ENCODE measurements at regions of chr7 and their contacts with region 1.

Region 1: DNA sequence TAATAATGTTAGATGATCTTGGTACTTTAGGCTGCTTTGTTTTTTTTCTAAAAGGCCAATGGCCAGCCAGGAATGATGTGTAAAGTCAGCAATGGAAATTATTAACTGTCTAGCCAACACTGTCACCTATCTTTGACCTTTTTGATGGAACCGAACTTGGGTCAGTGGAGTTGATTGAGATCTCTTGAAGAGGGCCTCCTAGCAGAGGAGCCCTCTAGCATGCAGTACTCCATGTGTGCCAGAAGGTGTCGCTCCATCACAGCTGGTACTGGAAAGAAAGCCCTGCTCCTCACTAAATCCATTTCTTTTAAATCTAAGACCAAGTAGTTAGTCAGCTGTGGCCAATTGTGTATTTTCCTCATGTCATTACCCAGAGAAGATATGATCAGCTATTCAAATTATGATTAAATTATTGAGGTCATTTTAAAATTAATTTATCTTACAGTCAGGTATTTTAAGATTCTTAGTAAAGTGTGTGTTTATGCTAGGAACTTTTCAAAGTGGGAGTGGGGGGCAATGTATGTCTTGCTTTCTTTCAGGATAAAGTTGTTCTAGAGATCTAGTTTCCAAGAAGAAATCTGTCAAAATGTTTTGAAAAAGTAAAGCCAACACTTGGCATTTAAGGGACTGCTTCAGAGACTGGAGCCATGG is 33.1 kb upstream of the CROT start:
- DNase-seq: peak; percentile 50
- H3K4me3 ChIP-seq: no peak overlapping the region
- H3K27ac ChIP-seq: no peak overlapping the region
- H3K4me1 ChIP-seq: peaks cover 15% of the 10 kb centered on the region
- H3K27me3 ChIP-seq: no peaks in the 10 kb centered on the region
- CTCF ChIP-seq: peak; percentile 99

Region 2: DNA sequence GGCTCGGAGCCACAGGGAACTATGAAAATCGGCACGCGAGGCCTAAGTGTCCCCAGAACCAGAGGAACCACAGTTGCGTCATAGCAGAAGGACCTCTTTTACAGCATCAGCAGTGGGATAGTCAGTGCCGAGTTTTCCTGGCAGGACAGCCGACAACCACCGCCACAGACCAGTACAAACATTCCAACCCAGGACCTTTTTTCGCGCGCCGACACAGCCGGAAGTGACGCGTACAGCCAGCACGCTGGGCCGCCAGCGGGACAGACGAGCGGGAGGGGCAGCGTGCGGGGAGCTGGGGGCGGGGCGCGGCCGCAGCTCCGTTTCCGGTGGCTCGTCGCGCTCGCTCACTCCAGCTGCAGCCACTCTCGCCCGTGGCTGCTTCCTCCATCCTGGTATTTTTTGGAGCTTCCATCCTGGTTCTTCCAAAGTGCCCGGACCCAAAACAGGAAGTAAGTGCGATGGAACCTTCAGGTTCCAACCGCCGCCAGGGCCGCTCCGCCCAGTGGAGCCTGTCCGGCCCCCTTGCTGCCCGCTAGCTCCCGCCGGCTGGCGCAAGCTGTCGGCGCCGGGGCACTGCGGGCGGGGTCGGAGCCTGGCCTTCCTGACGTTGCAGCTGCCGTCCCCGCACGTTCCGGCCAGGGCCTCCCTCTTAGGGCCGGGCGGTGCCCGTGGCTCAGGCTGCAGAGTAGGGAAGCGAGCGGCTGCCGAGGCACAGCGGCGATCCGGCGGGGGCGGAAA is 160.1 kb before region 1 on chr7 and contains the start of gene DMTF1:
- CTCF ChIA-PET with region 1: no interaction called
- dilution Hi-C with region 1: no loop called
- in situ Hi-C with region 1: no loop called
- intact Hi-C with region 1: loop called (anchors 5 kb)
- DNase-seq: peak; percentile 97
- H3K4me3 ChIP-seq: peak within 1 kb of the TSS; percentile 51 to 96 (median 58)
- H3K27ac ChIP-seq: peak within 1 kb of the TSS; percentile 81
- H3K4me1 ChIP-seq: peaks cover 24% of the 10 kb centered on the region
- H3K27me3 ChIP-seq: no peaks in the 10 kb centered on the region
- CTCF ChIP-seq: no peak
- total RNA-seq, gene DMTF1: 52.4 to 53.2 TPM

Region 3: DNA sequence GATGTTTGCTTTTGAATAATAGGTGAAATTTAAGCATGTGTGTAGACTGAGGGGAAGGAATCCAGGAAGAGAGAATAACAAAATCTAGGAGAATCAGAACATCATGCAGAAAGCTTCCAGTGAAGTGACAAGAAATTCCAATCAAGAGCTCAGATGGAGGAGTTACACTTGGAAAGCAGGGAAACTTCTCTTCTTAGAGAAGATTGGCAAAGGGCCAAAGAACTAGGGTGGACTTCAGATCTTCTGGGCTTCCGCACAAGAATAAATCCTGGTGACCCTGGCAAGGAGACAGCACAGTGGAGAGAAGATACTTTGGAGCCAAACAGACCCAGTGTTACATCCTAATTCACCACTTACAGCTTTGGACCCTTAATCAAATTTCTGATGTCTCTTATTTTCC is 60.2 kb before region 1 on chr7:
- CTCF ChIA-PET with region 1: no interaction called
- dilution Hi-C with region 1: no loop called
- in situ Hi-C with region 1: no loop called
- intact Hi-C with region 1: no loop called
- DNase-seq: no peak
- H3K4me3 ChIP-seq: no peak overlapping the region
- H3K27ac ChIP-seq: no peak overlapping the region
- H3K4me1 ChIP-seq: no peaks in the 10 kb centered on the region
- H3K27me3 ChIP-seq: peaks cover 2% of the 10 kb centered on the region
- CTCF ChIP-seq: no peak

Region 4: GRCh38 chr7:87359366-87359765 is 47.0 kb after region 1 on chr7:
- CTCF ChIA-PET with region 1: no interaction called
- dilution Hi-C with region 1: no loop called
- in situ Hi-C with region 1: no loop called
- intact Hi-C with region 1: loop called (anchors 2 kb)
- DNase-seq: peak; percentile 83
- H3K4me3 ChIP-seq: no peak overlapping the region
- H3K27ac ChIP-seq: peak overlapping the region; percentile 43
- H3K4me1 ChIP-seq: peaks cover 15% of the 10 kb centered on the region
- H3K27me3 ChIP-seq: no peaks in the 10 kb centered on the region
- CTCF ChIP-seq: no peak

Region 5: GRCh38 chr7:87404674-87405073 is 92.3 kb after region 1 on chr7:
- CTCF ChIA-PET with region 1: no interaction called
- dilution Hi-C with region 1: loop called (anchors 5 kb)
- in situ Hi-C with region 1: no loop called
- intact Hi-C with region 1: loop called (anchors 5 kb)
- DNase-seq: no peak
- H3K4me3 ChIP-seq: no peak overlapping the region
- H3K27ac ChIP-seq: no peak overlapping the region
- H3K4me1 ChIP-seq: no peaks in the 10 kb centered on the region
- H3K27me3 ChIP-seq: no peaks in the 10 kb centered on the region
- CTCF ChIP-seq: no peak

Region 6: DNA sequence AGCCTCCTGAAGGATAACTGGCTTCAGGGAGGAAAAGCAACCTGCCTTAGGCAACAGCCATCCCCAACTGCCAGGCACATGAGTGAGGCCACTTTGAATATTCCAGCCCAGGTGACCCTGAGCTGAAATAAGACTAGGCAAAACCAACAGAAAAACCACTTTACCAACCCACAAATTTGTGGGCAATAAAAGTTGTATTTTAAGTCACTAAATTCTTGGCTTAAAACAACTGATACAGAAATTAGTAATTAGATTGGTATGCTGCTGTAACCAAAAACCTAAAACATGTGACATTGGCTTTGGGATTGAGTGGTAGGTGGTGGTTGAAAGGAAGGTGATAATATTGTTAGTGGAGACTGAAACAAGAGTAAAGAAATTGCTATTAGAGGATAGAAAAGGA is 123.2 kb after region 1 on chr7:
- CTCF ChIA-PET with region 1: no interaction called
- dilution Hi-C with region 1: no loop called
- in situ Hi-C with region 1: no loop called
- intact Hi-C with region 1: no loop called
- DNase-seq: peak; percentile 11
- H3K4me3 ChIP-seq: no peak overlapping the region
- H3K27ac ChIP-seq: no peak overlapping the region
- H3K4me1 ChIP-seq: no peaks in the 10 kb centered on the region
- H3K27me3 ChIP-seq: peaks cover 6% of the 10 kb centered on the region
- CTCF ChIP-seq: no peak

Region 7: DNA sequence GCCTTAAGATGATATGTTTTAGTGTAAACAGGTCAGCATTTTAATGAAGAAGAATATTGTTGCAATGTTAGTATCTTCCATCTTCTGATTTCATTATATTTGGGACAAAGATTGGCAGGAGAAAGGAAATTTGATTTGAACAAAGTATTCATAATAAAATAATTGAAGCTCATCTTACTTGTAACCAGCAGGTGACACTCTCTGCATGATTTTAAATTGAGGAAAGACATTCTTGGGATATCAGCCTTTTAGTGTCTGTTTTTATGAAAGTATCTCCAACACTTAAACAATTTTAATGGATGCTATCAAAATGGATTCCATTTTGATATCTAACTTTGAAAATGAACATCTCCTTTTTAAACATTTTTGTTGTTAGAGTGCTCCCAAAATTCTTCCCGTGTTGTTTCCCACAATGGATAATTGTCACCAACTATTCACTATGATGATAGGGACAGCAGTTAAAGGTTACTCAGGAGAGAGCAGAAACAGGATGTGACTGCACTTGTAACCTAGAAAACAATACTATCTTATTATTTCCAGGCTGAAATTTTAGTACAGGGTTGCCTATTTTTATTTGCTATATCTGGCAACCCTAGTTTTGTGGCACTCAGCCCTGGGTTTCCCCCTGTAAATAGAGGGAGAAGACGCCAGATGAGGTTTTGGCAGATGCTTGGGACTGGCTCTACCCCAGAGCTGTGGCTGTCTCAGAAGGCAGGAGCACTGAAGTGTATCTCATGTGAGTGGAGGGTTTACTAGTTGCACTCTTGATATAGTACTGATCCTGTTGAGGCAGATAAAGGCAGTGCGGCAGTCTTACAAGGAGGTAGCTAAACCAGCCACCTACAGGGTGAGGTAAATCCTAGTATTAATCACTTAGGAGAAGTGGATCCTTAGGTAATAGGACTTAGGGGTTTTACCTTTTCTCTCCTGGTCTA is 194.2 kb after region 1 on chr7:
- CTCF ChIA-PET with region 1: no interaction called
- dilution Hi-C with region 1: no loop called
- in situ Hi-C with region 1: no loop called
- intact Hi-C with region 1: loop called (anchors 5 kb)
- DNase-seq: peak; percentile 5
- H3K4me3 ChIP-seq: no peak overlapping the region
- H3K27ac ChIP-seq: no peak overlapping the region
- H3K4me1 ChIP-seq: no peaks in the 10 kb centered on the region
- H3K27me3 ChIP-seq: peaks cover 2% of the 10 kb centered on the region
- CTCF ChIP-seq: peak; percentile 54 to 58

Region 8: GRCh38 chr7:87886875-87887274 is 574.5 kb after region 1 on chr7:
- CTCF ChIA-PET with region 1: no interaction called
- dilution Hi-C with region 1: no loop called
- in situ Hi-C with region 1: no loop called
- intact Hi-C with region 1: loop called (anchors 10 kb)
- DNase-seq: peak; percentile 7
- H3K4me3 ChIP-seq: no peak overlapping the region
- H3K27ac ChIP-seq: no peak overlapping the region
- H3K4me1 ChIP-seq: no peaks in the 10 kb centered on the region
- H3K27me3 ChIP-seq: no peaks in the 10 kb centered on the region
- CTCF ChIP-seq: peak; percentile 30 to 41

Measured in mammary epithelial cell (primary cell).